A549 (cell line): ENCODE measurements at regions of chr2 and their contacts with region 1.

Region 1: GRCh38 chr2:121076885-121077549 is 208.0 kb downstream of the TFCP2L1 start:
- DNase-seq: peak; percentile 58 to 75
- ATAC-seq: peak; percentile 48 to 73
- H3K4me3 ChIP-seq: no peak overlapping the region
- H3K27ac ChIP-seq: peak overlapping the region in 1 of 2 experiments; percentile 92; a peak in 2 of 6 replicates
- H3K4me1 ChIP-seq: peaks cover 29% of the 10 kb centered on the region
- CTCF ChIP-seq: peak; percentile 80
- EP300 ChIP-seq: no peak
- POLR2A ChIP-seq: no peak
- RAD21 ChIP-seq: peak; percentile 36

Region 2: GRCh38 chr2:120680136-120680761 is 396.8 kb before region 1 on chr2:
- CTCF ChIA-PET with region 1: interaction called, 858 read pairs
- POLR2A ChIA-PET with region 1: interaction called, 3 read pairs
- DNase-seq: peak; percentile 76 to 91
- ATAC-seq: peak; percentile 71 to 91
- H3K4me3 ChIP-seq: no peak overlapping the region
- H3K27ac ChIP-seq: no peak overlapping the region
- H3K4me1 ChIP-seq: no peaks in the 10 kb centered on the region
- CTCF ChIP-seq: peak; percentile 57
- EP300 ChIP-seq: no peak
- POLR2A ChIP-seq: no peak
- RAD21 ChIP-seq: peak; percentile 90 to 94

Region 3: GRCh38 chr2:120712180-120712681 is 364.8 kb before region 1 on chr2:
- CTCF ChIA-PET with region 1: interaction called, 16 read pairs
- POLR2A ChIA-PET with region 1: no interaction called
- DNase-seq: no peak
- ATAC-seq: no peak
- H3K4me3 ChIP-seq: no peak overlapping the region
- H3K27ac ChIP-seq: no peak overlapping the region
- H3K4me1 ChIP-seq: no peaks in the 10 kb centered on the region
- CTCF ChIP-seq: no peak
- EP300 ChIP-seq: no peak
- POLR2A ChIP-seq: no peak
- RAD21 ChIP-seq: no peak

Region 4: GRCh38 chr2:120914839-120915521 is 162.0 kb before region 1 on chr2:
- CTCF ChIA-PET with region 1: interaction called, 12 read pairs
- POLR2A ChIA-PET with region 1: interaction called, 23 read pairs
- DNase-seq: peak; percentile 51 to 90
- ATAC-seq: peak; percentile 30 to 46
- H3K4me3 ChIP-seq: no peak overlapping the region
- H3K27ac ChIP-seq: peak overlapping the region; percentile 95 to 98
- H3K4me1 ChIP-seq: peaks cover 83% of the 10 kb centered on the region
- CTCF ChIP-seq: no peak
- EP300 ChIP-seq: peak; percentile 83 to 96; a peak in 4 of 5 replicates
- POLR2A ChIP-seq: 0 out of 2 replicates have a peak, but pooled peaks have one; percentile 18
- RAD21 ChIP-seq: peak; percentile 7 to 49

Region 5: GRCh38 chr2:121095257-121096080 is 18.5 kb after region 1 on chr2:
- CTCF ChIA-PET with region 1: interaction called, 311 read pairs
- POLR2A ChIA-PET with region 1: interaction called, 3 read pairs
- DNase-seq: peak; percentile 79
- ATAC-seq: peak; percentile 87 to 94
- H3K4me3 ChIP-seq: no peak overlapping the region
- H3K27ac ChIP-seq: no peak overlapping the region
- H3K4me1 ChIP-seq: no peaks in the 10 kb centered on the region
- CTCF ChIP-seq: peak; percentile 78
- EP300 ChIP-seq: no peak
- POLR2A ChIP-seq: no peak
- RAD21 ChIP-seq: peak; percentile 81 to 87

Region 6: DNA sequence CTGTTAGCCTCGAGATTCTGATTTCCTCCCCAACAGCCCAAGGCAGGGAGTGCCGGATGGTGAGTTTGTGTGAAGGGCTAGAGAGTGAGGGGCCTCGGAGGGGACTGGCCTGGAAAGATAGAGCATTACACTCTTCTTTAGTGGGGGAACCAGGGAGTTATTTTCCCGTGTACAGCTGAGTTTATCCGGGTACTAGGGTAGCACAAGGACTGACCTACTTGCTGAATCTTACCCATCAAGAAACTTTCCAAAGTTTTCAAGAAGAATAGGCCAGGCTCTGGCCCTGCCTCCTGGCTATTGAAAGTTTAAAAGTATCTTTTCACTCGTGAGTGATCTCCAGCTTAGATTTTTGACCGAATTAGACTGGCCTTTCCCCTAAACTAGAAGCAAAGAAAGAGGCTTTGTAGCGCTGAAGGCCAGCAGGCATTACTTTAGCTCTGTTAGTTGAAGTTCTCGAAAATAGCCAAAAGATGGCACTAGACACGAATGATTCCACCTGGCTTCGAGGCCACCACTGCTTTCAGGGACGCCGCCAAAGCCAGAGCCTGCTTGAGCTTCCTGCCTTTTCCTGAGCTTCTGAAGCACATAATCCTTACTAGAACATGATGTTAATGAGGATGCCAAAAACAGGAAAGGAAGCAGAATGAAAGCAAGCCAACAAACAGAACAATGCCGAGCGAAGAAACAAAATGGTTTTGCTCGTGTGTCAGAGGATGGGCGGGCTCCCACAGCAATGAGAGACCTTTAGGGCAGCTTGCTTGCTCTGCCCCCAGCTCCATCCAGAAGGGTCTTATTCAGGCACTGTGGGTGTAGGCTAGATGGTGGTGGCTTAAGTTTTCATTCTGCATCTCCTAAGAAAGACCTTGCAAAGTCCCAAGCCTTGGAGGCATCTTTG is 734.2 kb after region 1 on chr2:
- CTCF ChIA-PET with region 1: no interaction called
- POLR2A ChIA-PET with region 1: no interaction called
- DNase-seq: peak; percentile 41 to 53
- ATAC-seq: peak; percentile 94 to 96
- H3K4me3 ChIP-seq: no peak overlapping the region
- H3K27ac ChIP-seq: no peak overlapping the region
- H3K4me1 ChIP-seq: no peaks in the 10 kb centered on the region
- CTCF ChIP-seq: peak; percentile 63
- EP300 ChIP-seq: no peak
- POLR2A ChIP-seq: no peak
- RAD21 ChIP-seq: peak; percentile 78 to 79